Activated CD4-positive, alpha-beta T cell treated with anti-CD3 and anti-CD28 coated beads for 36 hours (primary cell): ENCODE measurements at regions of chr11 and their contacts with region 1.

Region 1: GRCh38 chr11:102451681-102452460 is 694 bp downstream of the TMEM123 start:
- DNase-seq: peak; percentile 90
- ATAC-seq: peak; percentile 66
- H3K4me3 Mint-ChIP-seq: peak overlapping the region; percentile 86
- H3K27ac Mint-ChIP-seq: peak overlapping the region; percentile 91
- H3K4me1 Mint-ChIP-seq: peaks cover 82% of the 10 kb centered on the region
- H3K27me3 Mint-ChIP-seq: no peaks in the 10 kb centered on the region

Region 2: DNA sequence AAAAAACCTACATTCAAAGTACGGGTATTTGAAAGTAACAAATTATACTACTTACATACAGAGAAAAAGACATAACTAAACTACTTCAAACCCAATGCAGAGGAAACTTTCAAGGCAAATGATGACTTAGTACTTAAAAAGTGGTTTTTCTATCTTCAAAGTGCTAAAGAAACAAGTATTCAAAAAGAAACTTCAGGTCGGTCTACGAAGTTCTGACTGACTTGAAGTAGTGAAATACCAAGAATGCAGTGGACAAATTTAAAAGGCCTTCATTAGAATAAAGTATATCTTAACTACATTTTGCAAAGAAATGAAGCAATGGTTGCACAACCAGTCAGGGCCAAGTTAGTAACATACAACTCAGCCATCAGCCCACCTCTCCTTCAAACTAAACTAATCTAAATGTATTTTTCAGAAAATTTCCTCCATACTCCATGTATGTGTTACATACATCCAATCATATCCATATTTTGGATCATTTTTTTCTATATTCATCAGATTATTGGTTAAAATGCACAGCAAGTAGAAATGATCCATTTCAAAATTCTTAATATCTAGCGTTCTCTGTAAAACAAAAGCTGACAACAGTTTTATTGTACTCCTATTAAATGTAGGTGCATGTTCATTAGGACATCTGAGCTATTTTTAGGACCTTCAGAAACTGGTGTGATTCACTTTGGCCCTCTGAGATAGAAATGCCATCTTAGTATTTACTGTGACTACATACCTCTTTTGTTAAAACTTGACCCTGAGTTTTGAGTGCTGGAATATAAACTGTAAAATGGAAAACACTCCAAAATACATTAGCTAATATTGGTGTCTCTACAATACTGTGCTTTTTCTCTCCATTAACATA is 54.9 kb before region 1 on chr11:
- CTCF ChIA-PET with region 1: interaction called, 18 read pairs
- POLR2A ChIA-PET with region 1: interaction called, 7 read pairs
- intact Hi-C with region 1: loop called in 1 of 2 experiments (anchors 1 kb)
- DNase-seq: no peak
- ATAC-seq: peak; percentile 82
- H3K4me3 Mint-ChIP-seq: no peak overlapping the region
- H3K27ac Mint-ChIP-seq: peak overlapping the region; percentile 58
- H3K4me1 Mint-ChIP-seq: peaks cover 44% of the 10 kb centered on the region
- H3K27me3 Mint-ChIP-seq: no peaks in the 10 kb centered on the region

Region 3: GRCh38 chr11:102430158-102430836 is 21.6 kb before region 1 on chr11:
- CTCF ChIA-PET with region 1: interaction called, 5 read pairs
- POLR2A ChIA-PET with region 1: interaction called, 9 read pairs
- intact Hi-C with region 1: loop called (anchors 1 to 2 kb)
- DNase-seq: peak; percentile 71
- ATAC-seq: peak; percentile 89
- H3K4me3 Mint-ChIP-seq: peak overlapping the region; percentile 23
- H3K27ac Mint-ChIP-seq: peak overlapping the region; percentile 96
- H3K4me1 Mint-ChIP-seq: peaks cover 79% of the 10 kb centered on the region
- H3K27me3 Mint-ChIP-seq: no peaks in the 10 kb centered on the region

Region 4: GRCh38 chr11:102476812-102477211 is 24.9 kb after region 1 on chr11:
- CTCF ChIA-PET with region 1: interaction called, 11 read pairs
- POLR2A ChIA-PET with region 1: no interaction called
- intact Hi-C with region 1: no loop called
- DNase-seq: peak; percentile 74
- ATAC-seq: peak; percentile 86
- H3K4me3 Mint-ChIP-seq: peak overlapping the region; percentile 1
- H3K27ac Mint-ChIP-seq: peak overlapping the region; percentile 81
- H3K4me1 Mint-ChIP-seq: peaks cover 64% of the 10 kb centered on the region
- H3K27me3 Mint-ChIP-seq: no peaks in the 10 kb centered on the region

Region 5: GRCh38 chr11:102495161-102496042 is 43.5 kb after region 1 on chr11:
- CTCF ChIA-PET with region 1: interaction called, 6 read pairs
- POLR2A ChIA-PET with region 1: no interaction called
- intact Hi-C with region 1: loop called (anchors 1 to 2 kb)
- DNase-seq: peak; percentile 40
- ATAC-seq: peak; percentile 68
- H3K4me3 Mint-ChIP-seq: no peak overlapping the region
- H3K27ac Mint-ChIP-seq: no peak overlapping the region
- H3K4me1 Mint-ChIP-seq: peaks cover 28% of the 10 kb centered on the region
- H3K27me3 Mint-ChIP-seq: peaks cover 4% of the 10 kb centered on the region